PC-9 (cell line): ENCODE measurements at regions of chr19 and their contacts with region 1.

Region 1: DNA sequence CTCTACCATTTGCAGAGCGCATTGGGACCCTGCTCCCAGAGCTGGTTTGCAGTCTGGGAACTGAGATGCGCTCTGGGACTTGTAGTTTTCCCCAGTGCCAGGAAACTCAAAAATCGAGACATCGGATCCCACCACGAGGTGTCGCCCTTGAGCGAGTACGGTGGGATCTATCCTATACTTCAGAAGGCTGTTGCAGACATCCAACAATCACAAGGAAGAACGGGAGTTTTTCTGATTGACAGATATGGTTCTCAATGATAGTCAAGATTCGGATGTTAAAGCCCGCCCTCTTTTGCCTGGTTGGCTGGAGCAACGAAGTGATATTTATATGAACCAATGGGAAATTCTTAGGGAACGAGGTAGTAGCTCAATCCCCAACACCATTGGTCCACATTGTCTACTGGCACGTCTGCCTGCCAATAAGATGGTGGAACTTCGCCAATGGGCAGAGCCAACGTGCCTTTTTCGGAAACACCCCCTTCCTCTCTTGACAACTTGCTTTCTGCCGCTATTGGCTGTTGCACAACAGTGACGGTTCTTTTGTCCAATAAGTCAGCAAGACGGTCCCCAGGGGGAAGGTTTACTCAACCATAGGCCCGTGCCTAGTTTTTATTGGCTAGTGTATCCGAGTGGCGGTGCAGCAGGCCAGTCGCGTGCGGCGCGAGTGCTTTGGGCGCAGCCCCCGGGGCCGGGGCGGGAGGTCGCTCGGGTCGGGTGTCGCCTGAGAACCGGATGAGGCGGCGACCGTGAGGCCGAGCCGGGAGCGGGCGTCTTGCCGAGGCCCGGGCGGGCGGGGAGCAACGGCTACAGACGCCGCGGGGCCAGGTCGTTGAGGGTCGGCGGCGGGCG is at the start of gene DNM2:
- DNase-seq: peak; percentile 99 to 100
- H3K4me3 ChIP-seq: peak within 1 kb of the TSS; percentile 95
- H3K27ac ChIP-seq: no peak within 1 kb of the TSS
- H3K4me1 ChIP-seq: peaks cover 12% of the 10 kb centered on the region
- H3K27me3 ChIP-seq: no peaks in the 10 kb centered on the region
- CTCF ChIP-seq: peak; percentile 87
- total RNA-seq, gene DNM2: 169 and 188 TPM in 2 replicates

Region 2: GRCh38 chr19:10593820-10594637 is 123.6 kb before region 1 on chr19:
- CTCF ChIA-PET with region 1: no interaction called
- POLR2A ChIA-PET with region 1: no interaction called
- intact Hi-C with region 1: no loop called
- DNase-seq: peak; percentile 34 to 48
- H3K4me3 ChIP-seq: no peak overlapping the region
- H3K27ac ChIP-seq: peak overlapping the region; percentile 27; the same call in 1 of the 2 replicates
- H3K4me1 ChIP-seq: peaks cover 15% of the 10 kb centered on the region
- H3K27me3 ChIP-seq: no peaks in the 10 kb centered on the region
- CTCF ChIP-seq: no peak

Region 3: GRCh38 chr19:10701955-10702525 is 15.5 kb before region 1 on chr19:
- CTCF ChIA-PET with region 1: interaction called, 15 read pairs
- POLR2A ChIA-PET with region 1: no interaction called
- intact Hi-C with region 1: no loop called
- DNase-seq: no peak
- H3K4me3 ChIP-seq: peak overlapping the region; percentile 100
- H3K27ac ChIP-seq: no peak overlapping the region
- H3K4me1 ChIP-seq: peaks cover 14% of the 10 kb centered on the region
- H3K27me3 ChIP-seq: 0 out of 2 replicates have a peak, but pooled peaks cover 11% of the 10 kb centered on the region
- CTCF ChIP-seq: no peak

Region 4: GRCh38 chr19:10769533-10770491 is 52.2 kb after region 1 on chr19:
- CTCF ChIA-PET with region 1: interaction called, 6 read pairs
- POLR2A ChIA-PET with region 1: no interaction called
- intact Hi-C with region 1: loop called (anchors 1 kb)
- DNase-seq: no peak
- H3K4me3 ChIP-seq: no peak overlapping the region
- H3K27ac ChIP-seq: no peak overlapping the region
- H3K4me1 ChIP-seq: peaks cover 22% of the 10 kb centered on the region
- H3K27me3 ChIP-seq: no peaks in the 10 kb centered on the region
- CTCF ChIP-seq: peak; percentile 44; the same call in 1 of the 2 replicates

Region 5: GRCh38 chr19:10808937-10809652 is 91.5 kb after region 1 on chr19:
- CTCF ChIA-PET with region 1: interaction called, 3 read pairs
- POLR2A ChIA-PET with region 1: no interaction called
- intact Hi-C with region 1: loop called (anchors 1 kb)
- DNase-seq: peak; percentile 81 to 88
- H3K4me3 ChIP-seq: no peak overlapping the region
- H3K27ac ChIP-seq: peak overlapping the region; percentile 48
- H3K4me1 ChIP-seq: peaks cover 17% of the 10 kb centered on the region
- H3K27me3 ChIP-seq: no peaks in the 10 kb centered on the region
- CTCF ChIP-seq: no peak

Region 6: GRCh38 chr19:10864538-10864899 is 146.9 kb after region 1 on chr19:
- CTCF ChIA-PET with region 1: interaction called, 24 read pairs
- POLR2A ChIA-PET with region 1: interaction called, 3 read pairs
- intact Hi-C with region 1: loop called (anchors 1 kb)
- DNase-seq: peak; percentile 42 to 78
- H3K4me3 ChIP-seq: no peak overlapping the region
- H3K27ac ChIP-seq: no peak overlapping the region
- H3K4me1 ChIP-seq: peaks cover 10% of the 10 kb centered on the region
- H3K27me3 ChIP-seq: no peaks in the 10 kb centered on the region
- CTCF ChIP-seq: peak; percentile 95